Activated CD8-positive, alpha-beta T cell treated with anti-CD3 and anti-CD28 coated beads for 36 hours (primary cell): ENCODE measurements at regions of chr17 and their contacts with region 1.

Region 1: DNA sequence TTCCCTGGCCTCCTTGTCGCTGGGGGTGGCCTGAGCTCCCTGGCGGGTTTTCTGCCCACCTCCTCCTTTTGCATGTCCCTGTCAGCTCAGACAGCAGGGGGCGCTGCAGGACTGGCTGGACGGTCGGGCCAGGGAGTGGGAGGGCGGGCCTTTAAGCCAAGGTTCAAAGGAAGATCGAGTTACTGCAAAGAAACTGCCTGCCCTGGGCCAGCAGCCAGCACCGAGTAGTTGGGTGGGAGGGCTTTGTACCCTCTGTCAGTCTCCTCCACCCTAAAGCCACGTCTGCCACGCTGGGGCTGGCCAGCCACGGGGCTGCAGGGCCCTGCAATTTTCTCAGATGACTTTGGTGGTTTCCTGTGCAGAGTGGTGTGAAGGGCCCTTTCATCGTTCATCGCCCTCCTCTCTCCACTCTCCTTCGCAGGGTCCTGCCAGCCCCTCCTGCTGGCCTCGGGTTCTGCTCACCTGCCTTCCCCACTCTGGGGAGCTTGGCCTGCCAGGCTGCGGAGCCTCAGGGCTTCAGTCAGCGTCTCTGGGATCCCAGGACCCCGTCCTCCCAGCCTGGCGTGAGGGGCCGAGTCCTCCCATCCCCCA is 12.3 kb downstream of the GPR142 start:
- DNase-seq: peak; percentile 96
- ATAC-seq: peak; percentile 95
- H3K4me3 Mint-ChIP-seq: no peak overlapping the region
- H3K27ac Mint-ChIP-seq: no peak overlapping the region
- H3K4me1 Mint-ChIP-seq: no peaks in the 10 kb centered on the region
- H3K27me3 Mint-ChIP-seq: no peaks in the 10 kb centered on the region
- CTCF ChIP-seq: peak; percentile 94

Region 2: DNA sequence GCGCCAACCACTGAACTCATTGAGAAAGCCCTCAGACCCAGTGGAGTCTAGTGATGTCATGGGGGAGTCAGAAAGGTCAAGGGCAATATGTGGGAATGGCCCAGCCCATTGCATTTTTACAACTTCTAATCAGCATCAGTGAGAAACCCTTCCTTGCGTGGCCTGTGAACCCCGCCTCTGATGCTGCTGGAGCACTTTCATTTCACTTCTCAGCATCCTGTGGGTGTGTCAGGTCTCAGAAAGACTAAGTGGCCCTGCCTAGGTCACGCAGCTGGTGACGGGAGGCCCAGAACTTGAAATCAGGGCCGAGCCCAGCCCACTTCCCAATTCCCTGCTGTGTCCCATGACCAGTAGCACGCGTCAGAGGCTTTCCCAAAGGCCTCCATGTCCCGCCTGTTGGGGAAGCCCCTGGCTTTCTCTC is 99.5 kb before region 1 on chr17:
- CTCF ChIA-PET with region 1: no interaction called
- POLR2A ChIA-PET with region 1: no interaction called
- intact Hi-C with region 1: no loop called
- DNase-seq: peak; percentile 82
- ATAC-seq: peak; percentile 71
- H3K4me3 Mint-ChIP-seq: no peak overlapping the region
- H3K27ac Mint-ChIP-seq: peak overlapping the region; percentile 85
- H3K4me1 Mint-ChIP-seq: peaks cover 34% of the 10 kb centered on the region
- H3K27me3 Mint-ChIP-seq: no peaks in the 10 kb centered on the region
- CTCF ChIP-seq: no peak

Region 3: GRCh38 chr17:74361230-74362068 is 18.1 kb before region 1 on chr17 and contains the start of gene BTBD17:
- CTCF ChIA-PET with region 1: interaction called, 104 read pairs
- POLR2A ChIA-PET with region 1: no interaction called
- intact Hi-C with region 1: no loop called
- DNase-seq: peak; percentile 54
- ATAC-seq: peak; percentile 73
- H3K4me3 Mint-ChIP-seq: no peak within 1 kb of the TSS
- H3K27ac Mint-ChIP-seq: no peak within 1 kb of the TSS
- H3K4me1 Mint-ChIP-seq: no peaks in the 10 kb centered on the region
- H3K27me3 Mint-ChIP-seq: peaks cover 23% of the 10 kb centered on the region
- CTCF ChIP-seq: peak; percentile 55
- total RNA-seq, gene BTBD17: not detected

Region 4: DNA sequence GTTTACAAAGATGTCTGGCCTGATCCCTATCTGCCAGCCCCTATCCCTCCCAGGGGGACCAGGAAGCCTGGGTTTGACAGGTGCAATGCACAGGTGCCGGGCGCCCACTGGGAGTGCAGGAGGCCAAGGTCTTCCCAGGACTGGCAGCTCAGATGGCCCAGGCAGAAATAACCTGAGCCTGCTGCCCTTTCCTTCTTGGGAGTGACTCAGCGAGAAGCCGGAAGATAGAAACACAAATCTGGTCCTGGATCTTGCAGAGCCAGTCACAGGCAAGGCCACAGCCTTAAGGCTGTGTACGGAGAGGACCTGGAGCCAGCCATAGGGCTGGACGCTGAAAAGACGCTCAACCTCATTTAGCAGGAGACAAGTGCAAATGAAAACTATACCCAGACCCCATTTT is 15.4 kb after region 1 on chr17:
- CTCF ChIA-PET with region 1: interaction called, 43 read pairs
- POLR2A ChIA-PET with region 1: interaction called, 3 read pairs
- intact Hi-C with region 1: no loop called
- DNase-seq: no peak
- ATAC-seq: no peak
- H3K4me3 Mint-ChIP-seq: no peak overlapping the region
- H3K27ac Mint-ChIP-seq: no peak overlapping the region
- H3K4me1 Mint-ChIP-seq: no peaks in the 10 kb centered on the region
- H3K27me3 Mint-ChIP-seq: peaks cover 1% of the 10 kb centered on the region
- CTCF ChIP-seq: no peak

Region 5: DNA sequence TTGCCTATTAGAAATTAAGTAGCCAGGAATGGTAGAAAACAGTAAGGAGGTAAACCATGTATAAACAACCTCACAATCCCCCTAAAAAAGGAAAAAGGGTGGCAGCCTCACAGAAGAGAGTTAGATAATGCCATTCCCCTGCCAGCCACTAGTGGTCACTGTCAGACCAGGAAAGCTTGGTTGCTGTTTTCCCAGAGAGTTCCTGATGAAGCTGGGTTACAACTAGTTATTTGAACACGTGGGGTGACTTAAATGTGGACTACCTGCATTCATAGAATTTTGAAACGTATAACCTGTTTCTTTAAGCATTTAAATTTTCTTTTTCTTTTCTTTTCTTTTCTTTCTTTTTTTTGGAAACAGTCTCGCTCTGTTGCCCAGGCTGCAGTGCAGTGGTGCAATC is 58.1 kb after region 1 on chr17:
- CTCF ChIA-PET with region 1: interaction called, 27 read pairs
- POLR2A ChIA-PET with region 1: no interaction called
- intact Hi-C with region 1: no loop called
- DNase-seq: peak; percentile 23
- ATAC-seq: no peak
- H3K4me3 Mint-ChIP-seq: no peak overlapping the region
- H3K27ac Mint-ChIP-seq: no peak overlapping the region
- H3K4me1 Mint-ChIP-seq: peaks cover 2% of the 10 kb centered on the region
- H3K27me3 Mint-ChIP-seq: peaks cover 16% of the 10 kb centered on the region
- CTCF ChIP-seq: peak; percentile 85

Region 6: GRCh38 chr17:74478420-74479100 is 99.0 kb after region 1 on chr17:
- CTCF ChIA-PET with region 1: interaction called, 11 read pairs
- POLR2A ChIA-PET with region 1: no interaction called
- intact Hi-C with region 1: no loop called
- DNase-seq: peak; percentile 77
- ATAC-seq: peak; percentile 88
- H3K4me3 Mint-ChIP-seq: peak overlapping the region; percentile 24
- H3K27ac Mint-ChIP-seq: peak overlapping the region; percentile 92
- H3K4me1 Mint-ChIP-seq: peaks cover 52% of the 10 kb centered on the region
- H3K27me3 Mint-ChIP-seq: no peaks in the 10 kb centered on the region
- CTCF ChIP-seq: no peak

Region 7: GRCh38 chr17:74493381-74493833 is 113.8 kb after region 1 on chr17:
- CTCF ChIA-PET with region 1: interaction called, 32 read pairs
- POLR2A ChIA-PET with region 1: no interaction called
- intact Hi-C with region 1: loop called (anchors 5 kb)
- DNase-seq: peak; percentile 76
- ATAC-seq: peak; percentile 96
- H3K4me3 Mint-ChIP-seq: no peak overlapping the region
- H3K27ac Mint-ChIP-seq: no peak overlapping the region
- H3K4me1 Mint-ChIP-seq: peaks cover 3% of the 10 kb centered on the region
- H3K27me3 Mint-ChIP-seq: no peaks in the 10 kb centered on the region
- CTCF ChIP-seq: peak; percentile 96